Naive thymus-derived CD4-positive, alpha-beta T cell (primary cell): ENCODE measurements at regions of chr9 and their contacts with region 1.

Region 1: GRCh38 chr9:127785023-127785932 is 556 bp upstream of the CDK9 start:
- DNase-seq: peak; percentile 82 to 93 (median 90)
- ATAC-seq: peak; percentile 65
- H3K4me3 ChIP-seq: peak overlapping the region; percentile 53
- H3K4me3 Mint-ChIP-seq: peak overlapping the region; percentile 82 to 95 (median 92)
- H3K27ac ChIP-seq: peak overlapping the region; percentile 90
- H3K27ac Mint-ChIP-seq: peak overlapping the region; percentile 91 to 98 (median 96)
- H3K4me1 ChIP-seq: peaks cover 56 to 59% of the 10 kb centered on the region in 2 donors
- H3K4me1 Mint-ChIP-seq: peaks cover 34 to 75% (median 61%) of the 10 kb centered on the region in 7 donors
- H3K27me3 ChIP-seq: no peaks in the 10 kb centered on the region
- H3K27me3 Mint-ChIP-seq: no peaks in the 10 kb centered on the region

Region 2: DNA sequence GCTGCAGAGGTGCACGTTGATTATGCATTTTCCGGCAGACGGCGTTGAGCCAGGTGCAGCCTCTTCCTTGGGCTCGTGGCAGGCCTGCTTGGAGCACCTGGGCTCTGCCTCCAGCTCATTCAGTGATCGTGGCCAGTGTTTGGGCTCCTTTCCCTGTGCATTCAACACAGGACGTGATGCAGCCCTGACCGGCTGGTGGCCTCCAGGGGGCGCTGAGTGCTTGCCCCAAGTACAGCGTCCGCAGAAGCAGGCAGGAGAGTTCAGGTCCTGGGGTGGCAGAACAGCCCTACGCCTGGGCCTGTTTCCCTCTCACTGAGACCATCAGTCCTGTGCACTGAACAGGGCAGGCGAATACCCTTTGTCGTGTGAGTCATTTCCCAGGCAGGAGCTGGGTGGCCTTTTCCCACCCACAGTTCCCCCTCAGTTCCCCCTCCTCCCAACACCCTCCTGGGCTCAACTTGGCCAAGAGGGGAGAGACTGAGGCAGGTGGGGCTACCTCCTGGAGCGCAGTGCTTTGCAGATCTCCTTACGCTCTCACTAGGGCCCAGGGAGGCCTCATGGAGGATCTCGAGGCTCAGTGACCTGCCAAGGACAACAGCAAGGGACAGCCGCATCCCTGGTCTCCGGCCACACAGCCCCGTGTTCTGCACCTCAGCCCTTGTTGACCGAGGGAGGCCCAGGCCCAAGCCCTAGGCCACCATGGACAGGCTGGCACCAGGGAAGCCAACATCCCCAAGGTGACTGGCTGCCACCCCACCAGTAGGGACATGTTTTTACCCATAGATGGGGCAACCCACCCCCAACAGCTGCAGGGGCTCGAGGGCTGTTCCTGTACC is 281.1 kb before region 1 on chr9:
- CTCF ChIA-PET with region 1: no interaction called
- POLR2A ChIA-PET with region 1: no interaction called
- intact Hi-C with region 1: loop called in 1 of 2 experiments (anchors 1 kb)
- DNase-seq: peak; percentile 65 to 81 (median 75)
- ATAC-seq: peak; percentile 87
- H3K4me3 ChIP-seq: no peak overlapping the region
- H3K4me3 Mint-ChIP-seq: no peak overlapping the region
- H3K27ac ChIP-seq: no peak overlapping the region
- H3K27ac Mint-ChIP-seq: peak overlapping the region in 1 of 9 donors; percentile 69
- H3K4me1 ChIP-seq: no peaks in the 10 kb centered on the region
- H3K4me1 Mint-ChIP-seq: peaks cover 0 to 4% (median 0%) of the 10 kb centered on the region in 7 donors
- H3K27me3 ChIP-seq: no peaks in the 10 kb centered on the region
- H3K27me3 Mint-ChIP-seq: no peaks in the 10 kb centered on the region

Region 3: GRCh38 chr9:127611899-127612790 is 173.1 kb before region 1 on chr9 and contains the start of gene STXBP1:
- CTCF ChIA-PET with region 1: no interaction called
- POLR2A ChIA-PET with region 1: interaction called, 4 read pairs
- intact Hi-C with region 1: loop called in 1 of 2 experiments (anchors 5 kb)
- DNase-seq: peak; percentile 68 to 96 (median 79)
- ATAC-seq: peak; percentile 93
- H3K4me3 ChIP-seq: peak within 1 kb of the TSS; percentile 89
- H3K4me3 Mint-ChIP-seq: peak within 1 kb of the TSS; percentile 90 to 99 (median 96)
- H3K27ac ChIP-seq: peak within 1 kb of the TSS; percentile 51
- H3K27ac Mint-ChIP-seq: peak within 1 kb of the TSS; percentile 66 to 93 (median 86)
- H3K4me1 ChIP-seq: peaks cover 11 to 16% of the 10 kb centered on the region in 2 donors
- H3K4me1 Mint-ChIP-seq: peaks cover 32 to 42% (median 37%) of the 10 kb centered on the region in 7 donors
- H3K27me3 ChIP-seq: no peaks in the 10 kb centered on the region
- H3K27me3 Mint-ChIP-seq: peaks cover 0 to 40% (median 17%) of the 10 kb centered on the region in 5 donors
- total RNA-seq, gene STXBP1: 6.7 to 17.8 (median 14.1) TPM

Region 4: DNA sequence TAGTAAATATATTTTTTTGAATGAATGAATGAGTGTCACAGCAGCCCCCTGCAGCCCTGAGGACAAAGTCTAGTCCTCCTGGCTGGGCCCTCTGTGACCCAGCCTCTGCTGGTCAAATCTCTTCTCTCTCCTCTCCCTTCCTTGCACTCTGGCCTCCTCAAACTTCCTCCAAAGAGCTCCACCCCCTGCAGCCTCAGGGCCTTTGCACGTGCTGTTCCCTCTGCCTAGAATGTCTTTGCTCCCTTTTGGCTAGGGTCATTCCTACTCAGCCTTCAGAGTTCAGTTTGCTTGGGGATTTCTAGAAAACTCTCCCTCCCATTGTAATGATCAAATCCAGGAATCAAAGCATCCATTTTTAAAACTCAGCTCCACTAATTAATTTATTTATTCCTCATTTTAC is 19.9 kb before region 1 on chr9:
- CTCF ChIA-PET with region 1: interaction called, 14 read pairs
- POLR2A ChIA-PET with region 1: interaction called, 99 read pairs
- intact Hi-C with region 1: no loop called
- DNase-seq: no peak
- ATAC-seq: no peak
- H3K4me3 ChIP-seq: no peak overlapping the region
- H3K4me3 Mint-ChIP-seq: peak overlapping the region in 1 of 10 donors; percentile 58
- H3K27ac ChIP-seq: no peak overlapping the region
- H3K27ac Mint-ChIP-seq: peak overlapping the region in 6 of 9 donors; percentile 67 to 92 (median 76)
- H3K4me1 ChIP-seq: peaks cover 36 to 41% of the 10 kb centered on the region in 2 donors
- H3K4me1 Mint-ChIP-seq: peaks cover 60 to 82% (median 78%) of the 10 kb centered on the region in 7 donors
- H3K27me3 ChIP-seq: no peaks in the 10 kb centered on the region
- H3K27me3 Mint-ChIP-seq: no peaks in the 10 kb centered on the region

Region 5: GRCh38 chr9:127802576-127803443 is 17.5 kb after region 1 on chr9 and contains the start of gene FPGS:
- CTCF ChIA-PET with region 1: interaction called, 4 read pairs
- POLR2A ChIA-PET with region 1: interaction called, 34 read pairs
- intact Hi-C with region 1: loop called (anchors 1 kb)
- DNase-seq: peak; percentile 77 to 86 (median 85)
- ATAC-seq: peak; percentile 94
- H3K4me3 ChIP-seq: peak within 1 kb of the TSS; percentile 81
- H3K4me3 Mint-ChIP-seq: peak within 1 kb of the TSS; percentile 81 to 95 (median 90)
- H3K27ac ChIP-seq: peak within 1 kb of the TSS; percentile 93
- H3K27ac Mint-ChIP-seq: peak within 1 kb of the TSS; percentile 80 to 95 (median 89)
- H3K4me1 ChIP-seq: peaks cover 12 to 19% of the 10 kb centered on the region in 2 donors
- H3K4me1 Mint-ChIP-seq: peaks cover 4 to 31% (median 20%) of the 10 kb centered on the region in 7 donors
- H3K27me3 ChIP-seq: no peaks in the 10 kb centered on the region
- H3K27me3 Mint-ChIP-seq: no peaks in the 10 kb centered on the region
- total RNA-seq, gene FPGS: 90.4 to 123 (median 95.4) TPM

Region 6: DNA sequence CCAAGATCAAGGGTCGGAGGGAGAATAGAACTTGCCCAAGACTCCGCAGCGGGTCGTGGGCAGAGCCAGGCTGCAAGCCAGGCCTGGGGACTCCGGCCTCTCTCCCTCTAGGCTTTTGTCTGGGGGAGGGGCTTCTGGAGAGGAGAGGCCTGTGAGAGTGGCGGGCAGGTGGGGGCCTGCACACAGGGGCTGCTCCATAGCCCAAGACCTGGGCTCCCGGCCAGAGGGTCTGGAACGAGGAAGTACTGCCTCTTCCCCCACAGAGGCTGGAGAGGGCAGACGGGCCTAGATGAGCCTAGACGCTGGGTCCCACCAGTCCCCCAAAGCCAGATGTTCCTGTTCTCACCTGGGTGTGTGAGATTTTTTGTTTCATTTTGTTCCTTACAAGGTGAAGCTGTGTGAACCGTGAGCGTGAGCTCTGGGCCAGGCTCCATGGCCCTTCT is 119.3 kb after region 1 on chr9:
- CTCF ChIA-PET with region 1: interaction called, 3 read pairs
- POLR2A ChIA-PET with region 1: interaction called, 41 read pairs
- intact Hi-C with region 1: loop called in 1 of 2 experiments (anchors 1 kb)
- DNase-seq: peak in 1 of 9 donors; percentile 29
- ATAC-seq: peak; percentile 2
- H3K4me3 ChIP-seq: peak overlapping the region; percentile 72
- H3K4me3 Mint-ChIP-seq: peak overlapping the region; percentile 86 to 98 (median 94)
- H3K27ac ChIP-seq: peak overlapping the region; percentile 95
- H3K27ac Mint-ChIP-seq: peak overlapping the region; percentile 96 to 100 (median 99)
- H3K4me1 ChIP-seq: peaks cover 35 to 49% of the 10 kb centered on the region in 2 donors
- H3K4me1 Mint-ChIP-seq: peaks cover 38 to 68% (median 52%) of the 10 kb centered on the region in 7 donors
- H3K27me3 ChIP-seq: no peaks in the 10 kb centered on the region
- H3K27me3 Mint-ChIP-seq: no peaks in the 10 kb centered on the region

Region 7: GRCh38 chr9:128067876-128068613 is 282.8 kb after region 1 on chr9 and contains the start of gene SLC25A25:
- CTCF ChIA-PET with region 1: no interaction called
- POLR2A ChIA-PET with region 1: no interaction called
- intact Hi-C with region 1: loop called (anchors 5 kb)
- DNase-seq: peak; percentile 99 to 100 (median 100)
- ATAC-seq: peak; percentile 92
- H3K4me3 ChIP-seq: peak within 1 kb of the TSS; percentile 96
- H3K4me3 Mint-ChIP-seq: peak within 1 kb of the TSS in 8 of 10 donors; percentile 91 to 99 (median 94)
- H3K27ac ChIP-seq: peak within 1 kb of the TSS; percentile 88
- H3K27ac Mint-ChIP-seq: peak within 1 kb of the TSS; percentile 74 to 94 (median 85)
- H3K4me1 ChIP-seq: peaks cover 50 to 54% of the 10 kb centered on the region in 2 donors
- H3K4me1 Mint-ChIP-seq: peaks cover 38 to 69% (median 51%) of the 10 kb centered on the region in 7 donors
- H3K27me3 ChIP-seq: no peaks in the 10 kb centered on the region
- H3K27me3 Mint-ChIP-seq: no peaks in the 10 kb centered on the region
- total RNA-seq, gene SLC25A25: 12.4 to 26.3 (median 15.1) TPM